ENCODE measurements at regions of chr3 and their contacts with region 1.

Region 1: GRCh38 chr3:100260685-100261484 is at the start of gene TBC1D23:
- DNase-seq: peak; percentile 95 to 99 (median 98)
- H3K4me3 ChIP-seq: peak within 1 kb of the TSS; percentile 87 to 93
- H3K4me3 Mint-ChIP-seq: peak within 1 kb of the TSS; percentile 92 to 97 (median 94)
- H3K27ac ChIP-seq: peak within 1 kb of the TSS; percentile 93
- H3K27ac Mint-ChIP-seq: peak within 1 kb of the TSS; percentile 90 to 100 (median 99)
- H3K4me1 ChIP-seq: peaks cover 40% of the 10 kb centered on the region
- H3K4me1 Mint-ChIP-seq: peaks cover 40 to 63% (median 51%) of the 10 kb centered on the region in 4 donors
- H3K27me3 ChIP-seq: no peaks in the 10 kb centered on the region
- H3K27me3 Mint-ChIP-seq: no peaks in the 10 kb centered on the region
- total RNA-seq, gene TBC1D23: 43.3 to 44.9 TPM

Region 2: DNA sequence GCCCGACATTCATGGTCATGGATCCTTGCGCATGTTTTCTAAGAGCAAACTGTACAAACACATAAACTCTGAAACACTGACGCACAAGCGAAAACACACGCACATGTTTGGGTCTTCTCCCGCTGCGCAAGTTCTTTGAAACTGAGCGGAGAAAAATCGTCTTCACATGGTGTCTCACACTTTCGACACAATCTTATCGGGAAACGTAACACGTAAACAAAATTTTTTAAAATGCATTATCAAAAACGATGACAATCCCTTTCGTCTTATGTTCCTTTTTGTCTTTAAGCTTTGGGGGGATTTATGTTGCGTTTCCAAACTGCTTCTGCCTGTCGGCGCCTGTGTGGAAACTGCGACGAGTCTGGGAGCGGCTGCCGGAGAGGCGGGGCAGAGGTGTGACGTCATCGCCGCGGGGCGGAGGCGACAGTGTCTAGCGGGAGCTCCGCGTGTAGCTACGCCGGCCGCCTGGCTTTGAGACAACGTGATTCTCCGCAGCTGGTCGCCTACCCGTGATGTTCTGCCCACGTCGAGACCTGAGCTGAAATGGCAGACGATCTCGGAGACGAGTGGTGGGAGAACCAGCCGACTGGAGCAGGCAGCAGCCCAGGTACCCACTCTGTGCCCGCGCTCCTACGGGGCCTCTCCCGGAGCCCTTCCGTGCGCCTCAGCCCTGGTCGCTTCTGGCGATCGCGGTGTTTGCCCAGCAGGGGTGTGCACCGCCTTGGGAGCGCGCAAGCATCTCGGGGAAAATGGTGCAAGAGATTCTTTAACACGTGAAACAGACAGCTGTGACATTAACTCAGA is 443.2 kb before region 1 on chr3 and contains the start of gene CMSS1:
- CTCF ChIA-PET with region 1: interaction called, 4 read pairs
- POLR2A ChIA-PET with region 1: interaction called, 10 read pairs
- intact Hi-C with region 1: loop called (anchors 1 kb)
- DNase-seq: peak; percentile 96 to 98 (median 96)
- H3K4me3 ChIP-seq: peak within 1 kb of the TSS; percentile 59 to 73
- H3K4me3 Mint-ChIP-seq: peak within 1 kb of the TSS; percentile 93 to 98 (median 96)
- H3K27ac ChIP-seq: peak within 1 kb of the TSS; percentile 80
- H3K27ac Mint-ChIP-seq: peak within 1 kb of the TSS; percentile 99 to 100 (median 100)
- H3K4me1 ChIP-seq: peaks cover 20% of the 10 kb centered on the region
- H3K4me1 Mint-ChIP-seq: peaks cover 25 to 40% (median 34%) of the 10 kb centered on the region in 4 donors
- H3K27me3 ChIP-seq: no peaks in the 10 kb centered on the region
- H3K27me3 Mint-ChIP-seq: no peaks in the 10 kb centered on the region
- total RNA-seq, gene CMSS1: 18.3 to 20.5 TPM

Region 3: GRCh38 chr3:100334488-100335351 is 73.8 kb after region 1 on chr3 and contains the start of gene NIT2:
- CTCF ChIA-PET with region 1: no interaction called
- POLR2A ChIA-PET with region 1: interaction called, 12 read pairs
- intact Hi-C with region 1: loop called (anchors 2 kb)
- DNase-seq: peak; percentile 74 to 80 (median 75)
- H3K4me3 ChIP-seq: peak within 1 kb of the TSS; percentile 54 to 71
- H3K4me3 Mint-ChIP-seq: peak within 1 kb of the TSS; percentile 89 to 96 (median 96)
- H3K27ac ChIP-seq: peak within 1 kb of the TSS; percentile 67
- H3K27ac Mint-ChIP-seq: peak within 1 kb of the TSS; percentile 83 to 97 (median 95)
- H3K4me1 ChIP-seq: peaks cover 14% of the 10 kb centered on the region
- H3K4me1 Mint-ChIP-seq: peaks cover 16 to 40% (median 18%) of the 10 kb centered on the region in 4 donors
- H3K27me3 ChIP-seq: no peaks in the 10 kb centered on the region
- H3K27me3 Mint-ChIP-seq: no peaks in the 10 kb centered on the region
- total RNA-seq, gene NIT2: 30.5 to 32.6 TPM

Region 4: GRCh38 chr3:100492059-100493006 is 231.4 kb after region 1 on chr3 and contains the start of gene TMEM45A:
- CTCF ChIA-PET with region 1: no interaction called
- POLR2A ChIA-PET with region 1: interaction called, 3 read pairs
- intact Hi-C with region 1: loop called (anchors 1 kb)
- DNase-seq: peak; percentile 53 to 79 (median 72)
- H3K4me3 ChIP-seq: peak within 1 kb of the TSS; percentile 42 to 49
- H3K4me3 Mint-ChIP-seq: peak within 1 kb of the TSS; percentile 69 to 89 (median 86)
- H3K27ac ChIP-seq: peak within 1 kb of the TSS; percentile 26
- H3K27ac Mint-ChIP-seq: peak within 1 kb of the TSS in 6 of 7 donors; percentile 11 to 65 (median 36)
- H3K4me1 ChIP-seq: peaks cover 12% of the 10 kb centered on the region
- H3K4me1 Mint-ChIP-seq: peaks cover 5 to 15% (median 8%) of the 10 kb centered on the region in 4 donors
- H3K27me3 ChIP-seq: no peaks in the 10 kb centered on the region
- H3K27me3 Mint-ChIP-seq: peaks cover 5 to 8% of the 10 kb centered on the region in 2 donors
- total RNA-seq, gene TMEM45A: 0.23 TPM in 1 of 2 experiments, not detected in the other

Measured in CD4-positive, alpha-beta memory T cell (primary cell).